CD8-positive, alpha-beta T cell (primary cell): ENCODE measurements at regions of chr2 and their contacts with region 1.

Region 1: DNA sequence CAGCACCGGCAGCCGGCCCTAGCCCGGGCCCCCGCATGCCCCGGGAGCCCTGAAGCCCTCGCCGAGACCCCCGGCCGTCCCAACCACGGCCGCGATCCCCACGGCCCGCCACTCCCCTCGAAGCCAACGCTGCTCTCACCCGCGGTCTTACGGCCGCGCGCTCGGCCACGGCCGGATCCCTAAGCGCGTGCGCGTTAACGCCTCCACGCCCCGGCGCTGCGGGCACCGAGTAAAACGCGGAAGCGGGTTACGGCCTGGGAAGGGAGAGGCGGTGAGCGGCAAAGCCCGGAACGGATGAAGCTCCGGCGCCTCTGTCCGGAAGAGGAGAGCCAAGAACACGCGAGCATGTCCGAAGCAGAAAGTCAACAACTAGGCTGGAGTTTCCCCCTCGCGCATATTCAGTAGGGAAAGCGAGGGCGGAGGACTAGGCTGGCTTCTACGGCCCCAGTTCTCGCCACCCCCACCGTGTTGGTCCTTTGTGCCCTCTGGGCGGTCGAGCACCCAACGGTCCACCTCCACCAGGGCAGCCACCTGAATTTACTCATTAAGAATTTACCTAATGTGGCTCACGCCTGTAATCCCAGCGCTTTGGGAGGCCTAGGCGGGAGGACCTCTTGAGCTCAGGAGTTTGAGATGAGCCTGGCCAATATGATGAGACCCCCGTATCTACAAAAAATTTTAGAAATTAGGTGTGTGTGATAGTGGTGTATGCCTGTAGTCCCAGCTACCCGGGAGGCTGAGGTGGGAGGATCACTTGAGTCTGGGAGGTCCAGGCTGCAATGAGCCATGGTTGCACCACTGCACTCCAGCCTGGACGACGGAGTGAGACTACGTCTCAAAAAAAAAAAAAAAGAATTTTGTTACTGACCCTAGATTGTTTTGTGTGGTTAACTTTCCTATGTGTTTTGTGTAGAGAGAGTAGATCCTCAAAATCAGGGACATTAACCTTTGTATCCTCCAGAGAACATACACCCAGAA is at the start of gene KANSL3:
- DNase-seq: peak; percentile 79 to 95 (median 88)
- ATAC-seq: peak; percentile 85
- H3K4me3 ChIP-seq: peak within 1 kb of the TSS; percentile 71 to 95
- H3K4me3 Mint-ChIP-seq: peak within 1 kb of the TSS; percentile 93
- H3K27ac ChIP-seq: peak within 1 kb of the TSS; percentile 83 to 91
- H3K27ac Mint-ChIP-seq: peak within 1 kb of the TSS; percentile 96
- H3K4me1 ChIP-seq: peaks cover 24% of the 10 kb centered on the region
- H3K4me1 Mint-ChIP-seq: peaks cover 32% of the 10 kb centered on the region
- H3K27me3 ChIP-seq: no peaks in the 10 kb centered on the region
- H3K27me3 Mint-ChIP-seq: peaks cover 2% of the 10 kb centered on the region
- CTCF ChIP-seq: no peak
- total RNA-seq, gene KANSL3: 58.8 to 60.4 TPM

Region 2: GRCh38 chr2:96665083-96665569 is 26.7 kb after region 1 on chr2:
- CTCF ChIA-PET with region 1: no interaction called
- POLR2A ChIA-PET with region 1: no interaction called
- intact Hi-C with region 1: no loop called
- DNase-seq: peak in 1 of 9 experiments; percentile 25
- ATAC-seq: no peak
- H3K4me3 ChIP-seq: no peak overlapping the region
- H3K4me3 Mint-ChIP-seq: no peak overlapping the region
- H3K27ac ChIP-seq: no peak overlapping the region
- H3K27ac Mint-ChIP-seq: no peak overlapping the region
- H3K4me1 ChIP-seq: no peaks in the 10 kb centered on the region
- H3K4me1 Mint-ChIP-seq: no peaks in the 10 kb centered on the region
- H3K27me3 ChIP-seq: no peaks in the 10 kb centered on the region
- H3K27me3 Mint-ChIP-seq: no peaks in the 10 kb centered on the region
- CTCF ChIP-seq: no peak

Region 3: GRCh38 chr2:96806468-96807126 is 168.2 kb after region 1 on chr2:
- CTCF ChIA-PET with region 1: no interaction called
- POLR2A ChIA-PET with region 1: no interaction called
- intact Hi-C with region 1: loop called in 1 of 2 experiments (anchors 2 kb)
- DNase-seq: peak; percentile 13 to 79 (median 52)
- ATAC-seq: peak; percentile 90
- H3K4me3 ChIP-seq: peak overlapping the region; percentile 34 to 38
- H3K4me3 Mint-ChIP-seq: peak overlapping the region; percentile 75
- H3K27ac ChIP-seq: peak overlapping the region; percentile 58 to 70
- H3K27ac Mint-ChIP-seq: peak overlapping the region; percentile 95
- H3K4me1 ChIP-seq: peaks cover 17% of the 10 kb centered on the region
- H3K4me1 Mint-ChIP-seq: peaks cover 22% of the 10 kb centered on the region
- H3K27me3 ChIP-seq: no peaks in the 10 kb centered on the region
- H3K27me3 Mint-ChIP-seq: no peaks in the 10 kb centered on the region
- CTCF ChIP-seq: no peak